Activated CD8-positive, alpha-beta memory T cell treated with anti-CD3 and anti-CD28 coated beads, Interleukin-2, amount 10 ng/mL, durations not matched to agents 7 days and 5 days (primary cell): ENCODE measurements at regions of chr14 and their contacts with region 1.

Region 1: GRCh38 chr14:50607181-50607580 is 47.2 kb downstream of the ATL1 start:
- DNase-seq: no peak
- ATAC-seq: no peak
- H3K4me3 Mint-ChIP-seq: no peak overlapping the region
- H3K27ac Mint-ChIP-seq: no peak overlapping the region
- H3K4me1 Mint-ChIP-seq: peaks cover 5% of the 10 kb centered on the region
- H3K27me3 Mint-ChIP-seq: peaks cover 12% of the 10 kb centered on the region

Region 2: DNA sequence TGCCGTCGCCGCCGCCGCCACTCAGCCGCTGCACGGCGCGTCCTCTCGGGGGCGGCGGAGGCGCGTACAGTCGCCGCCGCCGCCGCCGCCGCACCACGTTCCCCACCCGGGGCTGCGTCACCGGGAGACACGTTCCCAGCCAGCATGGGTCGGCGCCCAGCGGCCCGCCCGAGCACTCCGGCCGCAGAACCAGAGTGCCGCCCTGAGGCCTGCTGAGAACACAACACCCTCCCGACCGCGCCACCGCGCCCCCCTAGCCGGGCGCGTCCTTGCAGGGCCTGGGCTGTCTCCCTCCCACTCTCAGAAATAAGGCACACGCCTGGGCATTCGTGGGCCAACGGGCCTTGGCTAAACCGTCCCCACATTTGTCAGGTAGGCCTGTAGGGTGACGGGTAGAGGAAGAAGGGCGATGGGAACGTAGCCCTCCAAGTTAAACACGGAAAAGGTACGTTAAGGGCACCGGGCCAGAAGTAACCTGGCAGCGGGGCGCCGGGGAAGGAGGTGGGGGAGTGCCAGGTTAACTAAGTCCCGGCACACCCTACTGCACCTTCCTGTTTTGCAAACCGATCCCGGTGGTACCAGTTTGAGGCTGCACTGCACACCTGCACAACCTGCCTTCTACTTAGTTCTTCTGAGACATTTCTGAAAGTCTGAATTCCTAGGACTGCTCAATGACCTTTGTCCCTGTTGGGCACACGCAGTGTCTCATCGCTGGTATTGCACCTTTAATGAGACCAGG is 74.5 kb before region 1 on chr14 and contains the start of gene MAP4K5:
- CTCF ChIA-PET with region 1: no interaction called
- DNase-seq: peak; percentile 92
- ATAC-seq: peak; percentile 97
- H3K4me3 Mint-ChIP-seq: peak within 1 kb of the TSS; percentile 88
- H3K27ac Mint-ChIP-seq: peak within 1 kb of the TSS; percentile 83
- H3K4me1 Mint-ChIP-seq: peaks cover 42% of the 10 kb centered on the region
- H3K27me3 Mint-ChIP-seq: peaks cover 7% of the 10 kb centered on the region
- total RNA-seq, gene MAP4K5: 31.4 to 38.7 TPM

Region 3: DNA sequence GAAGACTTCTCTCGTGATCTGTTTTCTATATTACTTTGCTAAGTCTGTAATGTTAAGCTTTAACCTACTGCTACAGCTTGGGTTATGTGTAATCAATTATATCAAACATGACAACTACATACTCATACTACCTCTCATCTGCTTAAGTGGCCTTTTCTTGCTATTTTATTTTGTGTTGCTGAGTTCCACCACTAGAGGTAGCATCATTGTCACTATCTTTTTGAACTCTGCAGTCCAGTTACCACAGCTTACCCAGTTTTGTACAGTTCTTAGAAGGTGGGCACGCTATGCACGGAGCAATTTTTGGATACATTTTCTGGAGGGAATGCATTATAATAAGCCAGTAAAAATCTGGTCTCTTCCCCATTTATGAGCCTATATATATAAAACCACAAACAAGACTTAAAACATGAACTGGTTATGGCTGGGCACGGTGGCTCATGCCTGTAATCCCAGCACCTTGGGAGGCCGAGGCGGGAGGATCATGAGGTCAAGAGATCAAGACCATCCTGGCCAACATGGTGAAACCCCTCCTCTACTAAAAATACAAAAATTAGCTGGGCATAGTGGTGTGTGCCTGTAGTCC is 12.5 kb after region 1 on chr14:
- CTCF ChIA-PET with region 1: interaction called, 11 read pairs
- DNase-seq: no peak
- ATAC-seq: peak; percentile 55
- H3K4me3 Mint-ChIP-seq: no peak overlapping the region
- H3K27ac Mint-ChIP-seq: no peak overlapping the region
- H3K4me1 Mint-ChIP-seq: peaks cover 2% of the 10 kb centered on the region
- H3K27me3 Mint-ChIP-seq: peaks cover 2% of the 10 kb centered on the region